Posterior vena cava (tissue), 2 donors: ENCODE measurements at regions of chr10 and their contacts with region 1.

Region 1: GRCh38 chr10:63483983-63484382 is 18.2 kb upstream of the JMJD1C start:
- DNase-seq: no peak

Region 2: GRCh38 chr10:62742536-62743061 is 741.4 kb before region 1 on chr10:
- intact Hi-C with region 1: no loop called
- DNase-seq: no peak

Region 3: GRCh38 chr10:63438506-63439498 is 45.2 kb before region 1 on chr10:
- intact Hi-C with region 1: loop called in 1 of 2 experiments (anchors 1 kb)
- DNase-seq: no peak

Region 4: DNA sequence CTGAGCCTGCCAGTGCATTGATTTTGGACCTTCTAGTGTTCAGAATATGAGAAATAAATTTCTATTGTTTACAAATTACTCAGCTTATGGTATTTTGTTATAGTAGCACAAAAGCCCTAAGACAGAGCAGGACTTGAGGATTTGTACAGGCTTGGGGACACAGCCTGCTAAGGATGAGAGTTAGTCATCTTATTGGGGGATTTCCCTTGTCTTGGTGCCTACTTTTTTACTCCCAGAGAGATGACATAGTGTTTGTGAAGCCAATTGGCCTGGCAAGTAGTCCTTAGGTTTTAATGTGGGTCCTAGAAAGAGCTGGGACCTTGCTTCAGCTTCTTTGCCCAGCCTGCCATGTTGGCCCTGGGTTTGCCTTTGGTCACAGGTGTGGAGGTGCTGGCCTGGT is 401.2 kb after region 1 on chr10:
- intact Hi-C with region 1: no loop called
- DNase-seq: no peak

Region 5: GRCh38 chr10:63901228-63901627 is 417.2 kb after region 1 on chr10:
- intact Hi-C with region 1: no loop called
- DNase-seq: no peak